ENCODE measurements at regions of chr11 and their contacts with region 1.

Region 1: GRCh38 chr11:93895106-93895862 is 44.9 kb upstream of the VSTM5 start:
- DNase-seq: no peak

Region 2: DNA sequence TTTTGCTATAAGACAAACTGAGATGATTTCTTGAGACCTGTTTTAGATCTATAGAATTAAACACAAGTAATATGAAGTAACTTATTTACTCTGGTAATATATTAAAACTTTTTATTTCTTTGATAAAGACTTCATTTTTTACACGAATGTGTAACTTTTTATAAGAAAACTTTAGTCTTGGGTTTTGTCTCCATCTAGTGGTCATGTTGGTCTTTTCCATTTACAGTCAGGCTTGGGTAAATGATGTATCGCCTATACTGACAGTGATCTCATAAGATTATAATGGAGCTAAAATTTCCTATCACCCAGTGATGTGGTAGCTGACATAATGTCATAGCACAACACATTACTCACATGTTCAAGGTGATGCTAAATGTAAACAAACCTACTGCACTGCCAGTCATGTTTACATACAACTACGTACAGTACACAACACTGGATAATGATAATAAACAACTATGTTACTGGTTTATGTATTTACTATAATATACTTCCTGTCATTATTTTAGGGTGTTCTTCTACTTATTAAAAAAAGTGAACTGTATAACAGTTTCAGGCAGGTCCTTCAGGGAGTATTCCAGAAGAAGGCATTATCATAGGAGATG is 609.5 kb after region 1 on chr11:
- intact Hi-C with region 1: loop called (anchors 5 kb)
- DNase-seq: no peak

Region 3: GRCh38 chr11:94602430-94603372 is 707.4 kb after region 1 on chr11:
- intact Hi-C with region 1: loop called (anchors 10 kb)
- DNase-seq: peak; percentile 82